Activated CD4-positive, alpha-beta T cell treated with anti-CD3 and anti-CD28 coated beads for 36 hours (primary cell): ENCODE measurements at regions of chr18 and their contacts with region 1.

Region 1: DNA sequence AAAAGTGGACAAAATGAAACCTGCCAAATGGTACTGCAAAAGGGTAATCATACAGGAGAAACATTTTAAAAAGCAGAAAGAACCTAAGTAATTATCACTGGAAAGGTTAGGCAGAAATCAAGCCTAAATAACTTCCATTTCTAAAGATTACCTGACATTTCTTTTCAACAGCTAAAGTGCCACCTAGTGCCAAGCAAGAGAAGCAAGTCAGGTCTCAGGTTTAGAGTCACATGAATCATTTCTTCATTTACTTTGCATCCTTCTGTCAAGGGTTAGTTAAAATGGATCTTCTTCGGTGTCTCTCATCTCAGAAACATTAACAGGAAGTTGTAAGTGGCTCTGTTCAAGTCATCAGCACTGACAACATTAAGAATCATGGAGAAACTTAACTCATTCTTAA is 90.3 kb downstream of the AKAIN1 start:
- DNase-seq: no peak
- ATAC-seq: peak; percentile 84
- H3K4me3 Mint-ChIP-seq: no peak overlapping the region
- H3K27ac Mint-ChIP-seq: no peak overlapping the region
- H3K4me1 Mint-ChIP-seq: peaks cover 6% of the 10 kb centered on the region
- H3K27me3 Mint-ChIP-seq: no peaks in the 10 kb centered on the region

Region 2: GRCh38 chr18:4908328-4908727 is 198.4 kb before region 1 on chr18:
- CTCF ChIA-PET with region 1: no interaction called
- POLR2A ChIA-PET with region 1: no interaction called
- intact Hi-C with region 1: no loop called
- DNase-seq: no peak
- ATAC-seq: no peak
- H3K4me3 Mint-ChIP-seq: no peak overlapping the region
- H3K27ac Mint-ChIP-seq: no peak overlapping the region
- H3K4me1 Mint-ChIP-seq: no peaks in the 10 kb centered on the region
- H3K27me3 Mint-ChIP-seq: no peaks in the 10 kb centered on the region

Region 3: GRCh38 chr18:5197032-5197434 is 90.3 kb after region 1 on chr18 and contains the start of gene AKAIN1:
- CTCF ChIA-PET with region 1: no interaction called
- POLR2A ChIA-PET with region 1: no interaction called
- intact Hi-C with region 1: loop called in 1 of 2 experiments (anchors 2 kb)
- DNase-seq: peak; percentile 47
- ATAC-seq: peak; percentile 60
- H3K4me3 Mint-ChIP-seq: peak within 1 kb of the TSS; percentile 56
- H3K27ac Mint-ChIP-seq: no peak within 1 kb of the TSS
- H3K4me1 Mint-ChIP-seq: peaks cover 15% of the 10 kb centered on the region
- H3K27me3 Mint-ChIP-seq: peaks cover 49% of the 10 kb centered on the region
- total RNA-seq, gene AKAIN1: not detected